ENCODE measurements at regions of chr17 and their contacts with region 1.

Region 1: GRCh38 chr17:70184770-70185169 is 15.4 kb downstream of the KCNJ2 start:
- DNase-seq: peak; percentile 76
- H3K4me3 ChIP-seq: no peak overlapping the region
- H3K27ac ChIP-seq: no peak overlapping the region
- H3K4me1 ChIP-seq: peaks cover 33% of the 10 kb centered on the region
- H3K27me3 ChIP-seq: no peaks in the 10 kb centered on the region
- CTCF ChIP-seq: no peak

Region 2: GRCh38 chr17:70242781-70243437 is 58.1 kb after region 1 on chr17:
- CTCF ChIA-PET with region 1: no interaction called
- dilution Hi-C with region 1: no loop called
- in situ Hi-C with region 1: no loop called
- intact Hi-C with region 1: no loop called
- DNase-seq: no peak
- H3K4me3 ChIP-seq: no peak overlapping the region
- H3K27ac ChIP-seq: no peak overlapping the region
- H3K4me1 ChIP-seq: no peaks in the 10 kb centered on the region
- H3K27me3 ChIP-seq: no peaks in the 10 kb centered on the region
- CTCF ChIP-seq: no peak

Region 3: GRCh38 chr17:70405492-70406220 is 220.9 kb after region 1 on chr17:
- CTCF ChIA-PET with region 1: no interaction called
- dilution Hi-C with region 1: no loop called
- in situ Hi-C with region 1: no loop called
- intact Hi-C with region 1: loop called (anchors 10 kb)
- DNase-seq: peak; percentile 93
- H3K4me3 ChIP-seq: peak overlapping the region in 1 of 3 experiments; percentile 14
- H3K27ac ChIP-seq: peak overlapping the region; percentile 61
- H3K4me1 ChIP-seq: peaks cover 17% of the 10 kb centered on the region
- H3K27me3 ChIP-seq: no peaks in the 10 kb centered on the region
- CTCF ChIP-seq: no peak